GM10248 (cell line): ENCODE measurements at regions of chr15 and their contacts with region 1.

Region 1: DNA sequence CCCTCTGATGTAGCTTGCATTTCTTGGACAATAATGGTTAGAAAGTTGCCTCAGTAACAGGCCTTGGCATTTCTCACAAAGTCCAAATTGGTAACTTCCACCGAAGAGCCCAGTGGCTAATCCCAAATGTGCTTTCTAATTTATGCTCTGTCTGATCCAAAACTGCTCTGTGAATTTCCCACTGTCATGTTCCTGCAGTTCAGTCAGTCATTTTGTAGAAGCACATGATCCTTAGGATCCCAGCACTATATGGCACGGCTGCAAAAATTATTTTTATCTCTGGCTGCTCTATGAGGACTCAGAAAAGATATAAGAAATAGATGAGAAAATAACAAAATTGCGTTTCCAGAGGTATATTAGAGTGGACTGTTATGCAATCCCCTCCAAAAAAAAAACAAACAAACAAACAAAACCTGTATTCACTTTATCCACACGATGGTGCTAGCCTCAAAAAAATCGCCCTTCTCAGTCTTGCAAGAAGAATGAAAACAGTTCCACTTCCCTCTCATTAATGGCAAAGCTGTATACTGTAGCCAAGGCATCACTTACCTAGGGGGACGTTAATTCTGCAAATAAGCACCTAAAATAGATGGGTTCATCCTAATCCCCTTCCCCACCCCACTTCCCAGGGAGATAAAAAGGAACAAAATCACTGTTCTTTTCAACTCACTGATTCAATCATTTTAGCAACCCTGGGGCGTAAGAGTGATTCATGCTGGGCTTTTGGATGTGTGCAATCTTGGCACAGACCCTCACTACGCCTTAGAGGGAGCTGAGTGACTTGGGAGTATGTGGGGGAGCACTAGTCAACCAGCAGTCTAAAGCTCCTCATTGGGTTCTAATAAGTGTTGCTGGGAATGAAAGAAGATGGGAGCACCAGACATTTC is 61.3 kb downstream of the TMCO5A start:
- DNase-seq: no peak
- CTCF ChIP-seq: peak; percentile 60

Region 2: DNA sequence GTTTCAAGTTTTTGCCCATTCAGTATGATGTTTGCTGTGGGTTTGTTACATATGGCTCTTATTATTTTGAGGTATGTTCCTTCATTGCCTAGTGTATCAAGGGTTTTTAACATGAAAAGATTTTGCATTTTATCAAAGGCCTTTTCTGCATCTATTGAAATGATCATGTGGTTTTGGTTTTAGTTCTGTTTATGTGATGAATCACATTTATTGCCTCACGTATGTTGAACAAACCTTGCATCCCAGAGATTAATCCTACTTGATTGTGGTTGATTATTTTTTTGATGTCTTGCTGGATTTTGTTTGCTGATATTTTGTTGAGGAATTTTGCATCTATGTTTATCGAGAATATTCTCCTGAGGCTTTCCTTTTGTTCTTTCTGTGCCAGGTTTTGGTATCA is 21.8 kb before region 1 on chr15:
- CTCF ChIA-PET with region 1: no interaction called
- POLR2A ChIA-PET with region 1: no interaction called
- DNase-seq: no peak
- CTCF ChIP-seq: no peak

Region 3: DNA sequence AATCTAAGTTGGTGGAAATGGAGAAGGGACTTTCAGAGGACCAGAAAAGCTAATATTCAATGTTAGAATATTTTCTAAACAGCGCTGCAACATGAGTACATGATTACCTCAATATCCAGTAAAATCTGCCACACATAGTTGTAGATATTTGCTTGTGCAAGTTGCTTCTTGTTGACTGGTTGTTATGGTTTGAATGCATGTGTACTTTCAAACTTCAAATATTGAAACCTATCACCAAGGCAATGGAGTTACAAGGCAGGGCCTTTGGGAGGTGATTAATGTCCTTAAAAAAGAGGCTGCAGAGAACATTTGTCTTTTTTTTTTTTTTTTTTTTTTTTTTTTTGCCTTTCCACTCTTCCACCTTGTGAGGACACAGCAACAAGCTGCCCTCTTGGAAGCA is 11.3 kb before region 1 on chr15:
- CTCF ChIA-PET with region 1: interaction called, 19 read pairs
- POLR2A ChIA-PET with region 1: no interaction called
- DNase-seq: no peak
- CTCF ChIP-seq: no peak

Region 4: GRCh38 chr15:38012894-38013293 is 17.2 kb after region 1 on chr15:
- CTCF ChIA-PET with region 1: interaction called, 12 read pairs
- POLR2A ChIA-PET with region 1: no interaction called
- DNase-seq: no peak
- CTCF ChIP-seq: no peak

Region 5: DNA sequence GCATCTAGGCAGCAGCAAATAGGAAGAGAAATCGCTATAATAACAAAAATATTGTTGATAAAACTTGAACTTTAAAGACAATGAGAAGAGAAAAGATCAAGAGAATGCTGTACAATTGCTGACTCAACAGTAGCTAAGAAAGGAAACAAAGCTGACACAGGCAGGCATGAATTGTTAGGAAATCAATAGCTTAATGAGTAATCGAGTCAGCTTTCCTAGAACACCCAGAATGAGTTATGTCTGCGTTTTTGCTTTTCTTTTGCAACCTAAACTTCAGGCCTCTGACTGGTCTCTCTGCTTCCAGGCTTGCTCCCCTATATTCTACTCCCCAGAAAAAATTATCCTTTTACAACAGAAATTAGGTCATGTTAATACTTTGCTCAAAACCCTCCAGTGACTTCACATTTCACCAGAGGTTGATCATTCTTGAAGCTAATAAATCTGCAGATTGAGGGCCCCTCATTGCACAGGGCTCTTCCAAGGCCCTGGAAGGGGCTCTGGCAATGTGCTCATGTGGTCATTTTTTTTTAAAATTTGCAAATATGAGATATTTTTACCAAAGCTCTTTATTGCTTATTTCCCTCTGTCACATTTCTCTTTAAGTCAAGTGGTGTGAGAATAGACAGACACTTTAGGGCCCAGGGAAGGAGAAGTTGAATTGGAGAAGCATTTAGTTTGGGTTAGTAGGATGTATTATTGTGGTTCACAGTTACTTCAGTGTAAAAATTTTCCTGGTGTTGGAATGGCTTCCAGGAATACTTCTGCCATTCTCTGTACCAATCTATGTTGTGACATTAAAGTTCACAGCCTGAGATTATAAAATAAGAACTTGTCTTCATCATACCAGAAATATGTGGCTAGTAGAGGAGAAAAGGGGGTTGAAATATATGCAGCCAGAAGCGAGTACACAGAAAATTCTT is 55.1 kb after region 1 on chr15:
- CTCF ChIA-PET with region 1: no interaction called
- POLR2A ChIA-PET with region 1: no interaction called
- DNase-seq: no peak
- CTCF ChIP-seq: no peak

Region 6: DNA sequence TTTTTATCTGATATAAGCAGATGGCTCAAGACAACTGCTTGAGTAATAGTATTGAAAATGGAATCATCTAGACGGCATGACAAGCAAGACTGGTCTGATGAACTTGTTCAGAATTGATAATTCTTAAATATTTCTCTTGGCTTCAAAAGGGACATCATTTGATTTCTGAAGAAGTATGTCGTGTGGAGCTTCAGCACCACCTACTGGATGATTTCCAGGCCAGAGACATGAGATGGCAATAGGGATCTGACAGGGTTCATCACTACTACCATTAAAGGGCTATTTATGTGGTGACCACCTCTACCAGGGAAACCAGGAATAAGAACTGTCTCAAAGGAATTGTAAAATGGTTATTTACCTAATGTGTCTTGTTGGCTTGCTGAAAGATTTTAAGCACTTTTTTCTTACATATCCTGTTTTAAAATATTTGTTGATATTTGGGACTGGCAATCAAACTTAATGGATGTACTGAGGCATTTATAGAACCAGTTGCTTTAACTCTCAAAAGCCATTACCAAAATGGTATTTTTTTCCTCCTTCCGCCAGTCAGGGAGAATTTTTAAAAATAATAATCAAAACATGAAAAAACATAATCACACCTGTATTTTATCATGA is 358.7 kb after region 1 on chr15:
- CTCF ChIA-PET with region 1: interaction called, 77 read pairs
- POLR2A ChIA-PET with region 1: no interaction called
- DNase-seq: peak; percentile 32
- CTCF ChIP-seq: peak; percentile 68

Region 7: DNA sequence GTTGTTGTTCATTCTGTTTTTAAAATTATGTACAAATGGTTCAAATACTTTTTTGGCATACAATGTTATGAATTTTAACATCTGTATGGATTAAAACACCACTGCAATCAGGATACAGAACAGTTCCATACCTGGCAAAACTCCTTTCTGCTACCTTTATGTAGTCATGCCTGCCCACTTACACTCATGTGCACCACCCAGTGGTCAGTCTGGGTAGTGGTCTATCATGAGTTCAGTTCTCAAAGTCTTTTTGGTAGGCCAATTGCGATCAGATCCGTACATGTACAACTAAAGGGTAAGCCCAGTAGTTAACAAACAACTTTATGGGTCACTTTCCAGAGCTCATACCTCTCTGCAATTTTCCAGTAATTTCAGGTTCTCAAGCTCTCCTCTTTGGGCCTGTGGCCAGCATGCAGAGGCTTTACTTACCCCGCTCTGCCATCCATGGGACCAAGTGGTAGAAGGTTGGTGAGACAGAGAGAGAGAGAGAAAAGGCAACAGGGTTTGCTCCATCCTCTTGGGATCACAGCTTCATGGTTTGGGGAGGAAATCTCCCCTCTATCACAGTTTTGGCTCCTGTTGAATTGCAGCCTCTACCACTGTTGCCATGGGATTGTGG is 394.3 kb after region 1 on chr15:
- CTCF ChIA-PET with region 1: interaction called, 35 read pairs
- POLR2A ChIA-PET with region 1: no interaction called
- DNase-seq: peak; percentile 48
- CTCF ChIP-seq: peak; percentile 78